BJ (cell line): ENCODE measurements at regions of chr1 and their contacts with region 1.

Region 1: DNA sequence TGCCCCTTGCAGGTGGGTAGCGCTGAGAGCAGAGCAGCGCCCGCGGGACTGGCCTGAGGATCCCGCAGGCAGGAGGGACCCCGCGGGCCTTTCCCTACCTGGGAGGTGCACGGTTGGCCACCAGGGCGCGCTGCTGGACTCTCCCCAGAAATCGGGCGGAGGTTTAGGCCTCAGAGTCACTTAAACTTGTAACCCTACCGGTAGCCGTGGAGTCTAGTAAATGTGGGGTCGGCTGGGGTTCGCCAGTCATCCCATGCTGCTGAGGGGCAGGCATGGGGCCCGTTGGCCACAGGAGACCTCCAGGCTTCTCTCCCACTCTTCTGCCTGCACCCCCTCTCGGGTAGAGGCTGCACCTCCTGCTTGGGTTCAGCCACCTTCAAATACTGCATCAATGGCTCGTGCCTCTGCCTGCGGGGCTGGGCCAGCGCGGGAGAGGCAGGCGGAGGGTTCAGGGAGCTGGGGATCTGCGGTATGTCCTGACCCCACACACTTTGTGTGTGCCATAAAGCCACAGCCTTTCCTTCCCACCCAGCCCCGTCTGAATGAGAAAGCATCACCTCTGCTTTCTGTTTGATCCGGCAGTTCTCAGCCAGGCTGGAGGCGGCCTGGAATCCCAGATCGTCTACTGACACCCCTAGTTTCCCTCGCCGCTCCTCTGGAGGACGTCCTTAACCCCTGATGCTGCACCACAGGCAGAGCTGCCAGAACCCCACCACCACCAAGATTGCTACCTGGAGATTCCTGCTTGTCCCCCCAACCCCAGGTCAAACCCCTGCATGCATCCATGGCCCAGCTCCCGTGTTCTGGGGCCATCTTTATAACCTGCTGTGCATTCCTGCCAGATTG is 12.3 kb upstream of the GSTM4 start:
- DNase-seq: no peak
- H3K4me3 ChIP-seq: no peak overlapping the region
- H3K27me3 ChIP-seq: no peaks in the 10 kb centered on the region
- CTCF ChIP-seq: peak; percentile 85

Region 2: DNA sequence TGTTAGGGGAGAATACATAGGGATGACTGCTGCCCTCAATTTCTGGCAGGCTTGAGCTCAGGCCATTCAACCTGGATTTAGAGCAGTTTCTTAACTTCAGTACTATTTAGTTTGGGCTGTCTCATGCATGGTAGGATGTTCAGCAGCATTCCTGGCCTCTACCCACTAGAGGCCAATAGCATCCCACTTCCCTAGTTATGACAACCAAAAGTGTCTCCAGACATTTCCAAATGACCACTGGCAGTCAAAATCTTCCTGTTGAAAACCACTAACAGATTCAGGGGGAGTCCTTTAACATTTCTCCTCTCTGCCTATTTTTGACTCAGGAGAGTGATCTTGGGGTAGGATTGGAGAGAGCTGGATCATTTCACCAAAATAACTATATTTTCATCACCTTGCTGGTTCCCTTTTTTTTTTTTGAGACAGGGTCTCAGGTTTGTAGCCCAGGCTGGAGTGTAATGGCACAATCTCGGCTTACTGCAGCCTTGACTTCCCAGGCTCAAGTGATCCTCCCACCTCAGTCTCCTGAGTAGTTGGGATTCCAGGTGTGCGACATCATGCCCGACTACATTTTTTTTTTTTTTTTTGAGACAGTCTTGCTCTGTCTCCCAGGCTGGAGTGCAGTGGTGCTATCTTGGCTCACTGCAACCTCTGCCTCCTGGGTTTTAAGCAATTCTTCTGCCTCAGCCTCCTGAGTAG is 32.9 kb before region 1 on chr1:
- CTCF ChIA-PET with region 1: interaction called, 22 read pairs
- POLR2A ChIA-PET with region 1: no interaction called
- DNase-seq: no peak
- H3K4me3 ChIP-seq: no peak overlapping the region
- H3K27me3 ChIP-seq: no peaks in the 10 kb centered on the region
- CTCF ChIP-seq: no peak

Region 3: GRCh38 chr1:109655601-109656519 is 12.3 kb after region 1 on chr1 and contains the start of gene GSTM4:
- CTCF ChIA-PET with region 1: interaction called, 210 read pairs
- POLR2A ChIA-PET with region 1: no interaction called
- DNase-seq: no peak
- H3K4me3 ChIP-seq: peak within 1 kb of the TSS; percentile 66
- H3K27me3 ChIP-seq: peaks cover 2% of the 10 kb centered on the region; the same call in 1 of the 2 replicates
- CTCF ChIP-seq: peak; percentile 46
- polyA plus RNA-seq, gene GSTM4: 28.4 and 28.5 TPM in 2 replicates

Region 4: DNA sequence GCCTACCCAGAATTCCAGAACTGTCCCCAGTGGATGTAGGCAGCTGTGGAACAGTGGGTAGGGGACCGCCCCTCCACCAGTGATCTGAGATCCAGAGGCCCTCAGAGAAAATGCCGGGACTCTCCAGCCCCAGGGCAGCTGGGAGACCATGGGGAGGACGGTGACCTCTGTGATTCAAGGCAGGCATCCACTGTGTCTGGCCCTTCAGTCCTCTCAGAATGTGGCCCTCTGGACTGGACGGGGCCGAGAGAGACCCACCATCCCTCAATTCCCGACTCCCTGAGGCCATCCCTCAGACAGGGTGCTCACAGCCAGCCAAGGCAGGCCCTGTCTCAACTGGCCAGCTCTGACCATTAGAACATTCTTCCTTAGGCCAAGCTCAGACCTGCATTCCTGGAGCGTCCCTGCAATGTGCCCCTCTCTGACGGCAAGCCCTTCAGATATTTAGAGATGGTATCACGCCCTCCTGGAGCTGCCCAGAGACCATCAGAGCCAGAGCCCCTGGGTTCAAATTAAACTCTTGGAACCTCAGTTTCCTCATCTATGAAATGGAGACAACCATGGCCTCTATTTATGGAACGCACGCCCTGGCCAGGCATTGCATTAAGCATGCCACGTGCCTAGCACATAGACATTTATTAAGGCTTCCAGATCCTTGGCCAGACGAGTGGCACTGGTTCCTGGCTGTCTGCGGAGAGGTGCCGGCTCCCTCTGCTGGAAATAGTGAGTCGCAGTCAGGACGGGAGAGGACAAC is 129.7 kb after region 1 on chr1:
- CTCF ChIA-PET with region 1: interaction called, 288 read pairs
- POLR2A ChIA-PET with region 1: interaction called, 4 read pairs
- DNase-seq: no peak
- H3K4me3 ChIP-seq: no peak overlapping the region
- H3K27me3 ChIP-seq: no peaks in the 10 kb centered on the region; the same call in 1 of the 2 replicates
- CTCF ChIP-seq: peak; percentile 91